Left colon (tissue), 2 donors: ENCODE measurements at regions of chr22 and their contacts with region 1.

Region 1: GRCh38 chr22:42313804-42314581 is 43.5 kb upstream of the TCF20 start:
- DNase-seq: peak; percentile 77 to 92
- ATAC-seq: peak; percentile 68

Region 2: DNA sequence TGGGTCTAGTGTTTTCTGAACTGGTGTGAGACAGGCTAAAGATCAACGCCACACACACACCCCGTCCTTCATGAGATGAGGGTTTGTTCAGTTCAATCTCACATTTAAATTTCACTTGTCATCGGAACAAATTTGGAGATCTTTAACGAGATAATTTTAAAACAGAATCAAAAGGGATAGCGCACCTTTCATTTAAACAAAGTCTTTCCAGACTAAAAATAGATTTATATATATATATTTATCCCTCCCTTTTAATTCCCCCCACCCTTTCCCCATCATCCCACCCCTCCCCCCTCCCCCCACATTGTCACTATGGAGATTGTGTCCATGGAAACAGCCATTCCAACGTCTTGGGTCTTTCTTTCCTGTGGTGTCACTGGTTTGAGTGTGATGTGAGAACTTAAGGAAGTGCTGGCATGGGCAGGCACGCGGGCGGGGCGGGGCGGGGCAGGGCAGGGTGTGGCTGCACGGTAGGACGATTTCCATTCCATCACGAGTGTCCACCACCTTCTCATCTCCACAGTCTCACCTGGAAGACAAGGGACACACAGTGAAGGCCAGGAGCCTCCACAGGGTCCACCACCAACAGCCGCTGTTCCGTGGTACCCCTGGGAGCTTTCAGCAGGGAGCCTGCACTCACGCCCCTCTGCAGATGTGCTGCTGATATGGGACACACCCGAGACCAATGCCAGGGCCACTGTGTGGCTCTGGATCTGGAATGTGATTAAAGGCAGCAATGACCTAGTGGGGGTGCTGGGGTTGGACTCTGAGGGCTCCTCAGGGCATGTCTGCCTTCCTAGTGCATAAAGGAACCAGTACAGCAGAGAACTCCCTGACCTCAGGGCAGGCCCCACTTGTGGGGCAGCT is 152.9 kb before region 1 on chr22:
- intact Hi-C with region 1: loop called in 1 of 2 experiments (anchors 5 kb)
- DNase-seq: peak in 1 of 2 donors; percentile 49
- ATAC-seq: peak; percentile 85

Region 3: DNA sequence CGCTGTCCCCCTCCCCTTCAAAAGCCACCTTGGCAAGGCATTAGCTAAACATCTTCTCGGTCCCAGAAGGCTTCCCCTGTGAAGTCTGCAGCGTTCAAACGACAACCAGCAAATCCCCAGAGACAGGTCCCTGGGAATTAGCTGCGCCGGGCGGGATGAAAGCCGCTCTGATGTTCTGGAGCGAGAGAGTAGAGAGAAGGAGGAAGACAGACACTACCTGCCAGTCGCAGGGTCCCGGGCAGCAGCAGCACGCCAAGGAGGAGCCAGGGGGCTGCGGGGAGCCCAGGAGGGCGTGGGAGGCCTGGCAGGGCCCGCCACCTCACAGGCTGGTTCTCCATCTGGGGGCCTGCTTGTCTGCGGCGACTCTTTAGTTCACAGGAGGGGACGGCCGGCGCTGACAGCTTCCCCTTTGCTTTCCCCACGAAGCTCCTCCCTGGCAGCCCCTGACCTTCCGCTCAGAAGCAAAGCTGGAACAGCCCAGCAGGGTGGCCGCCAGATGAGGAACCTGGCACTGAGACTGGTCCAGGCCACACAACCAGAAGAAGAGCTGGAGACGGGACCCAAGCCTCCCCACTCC is 118.1 kb after region 1 on chr22 and contains the start of gene NFAM1:
- intact Hi-C with region 1: no loop called
- DNase-seq: peak; percentile 38 to 57
- ATAC-seq: no peak
- total RNA-seq, gene NFAM1: 0.55 to 2.9 TPM